Activated CD4-positive, alpha-beta T cell treated with anti-CD3 and anti-CD28 coated beads, Interleukin-2, amount 10 ng/mL, durations not matched to agents 24 days and 14 days (primary cell): ENCODE measurements at regions of chr17 and their contacts with region 1.

Region 1: DNA sequence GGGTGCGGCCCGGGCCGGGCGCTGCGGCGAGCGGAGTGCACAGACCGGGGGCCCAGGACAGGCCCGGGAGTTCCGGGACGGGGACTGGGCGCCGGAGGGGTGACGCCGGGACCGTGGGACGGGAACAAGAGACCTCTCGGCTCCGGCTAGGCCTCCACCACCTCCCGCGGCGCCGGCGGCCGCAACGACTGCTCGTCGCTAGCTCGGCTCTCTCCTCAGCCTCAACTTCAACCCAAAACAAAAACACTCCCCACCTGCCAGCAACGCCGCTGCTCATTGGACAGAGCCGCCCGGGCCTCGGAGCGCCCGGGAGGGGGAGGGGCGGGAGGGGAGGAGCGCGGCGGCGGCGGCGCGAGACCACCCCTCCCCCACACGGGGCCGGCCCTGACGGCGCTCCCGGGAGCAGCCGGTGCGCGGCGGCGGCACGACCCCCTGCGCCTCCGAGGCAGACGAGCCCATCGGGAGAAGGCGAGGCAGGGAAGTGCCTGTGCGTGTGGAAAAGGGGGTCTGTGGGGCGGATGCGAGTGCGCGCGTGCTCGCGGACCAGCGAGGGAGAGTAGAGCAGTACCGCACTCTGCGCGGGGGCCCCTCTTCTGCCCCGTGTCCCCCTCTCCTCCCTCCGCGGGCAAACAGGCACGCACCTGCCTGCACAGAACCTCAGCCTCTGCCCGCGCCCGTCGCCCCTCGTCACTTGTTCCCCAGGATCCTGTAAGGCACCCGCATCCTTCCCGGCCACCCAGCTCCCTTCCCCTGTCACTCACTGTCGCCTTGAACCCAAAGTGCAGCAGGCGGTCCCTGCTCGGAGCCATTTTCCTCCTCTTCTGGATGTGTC is at the start of gene FBXL20:
- DNase-seq: peak; percentile 97
- H3K4me3 Mint-ChIP-seq: peak within 1 kb of the TSS; percentile 93
- H3K27ac Mint-ChIP-seq: peak within 1 kb of the TSS; percentile 96
- H3K4me1 Mint-ChIP-seq: peaks cover 32% of the 10 kb centered on the region
- H3K27me3 Mint-ChIP-seq: no peaks in the 10 kb centered on the region
- total RNA-seq, gene FBXL20: 20.8 and 21.8 TPM in 2 replicates

Region 2: GRCh38 chr17:38702166-38702899 is 699.3 kb before region 1 on chr17:
- intact Hi-C with region 1: loop called (anchors 2 kb)
- DNase-seq: peak; percentile 93
- H3K4me3 Mint-ChIP-seq: peak overlapping the region; percentile 90
- H3K27ac Mint-ChIP-seq: peak overlapping the region; percentile 100
- H3K4me1 Mint-ChIP-seq: peaks cover 47% of the 10 kb centered on the region
- H3K27me3 Mint-ChIP-seq: no peaks in the 10 kb centered on the region

Region 3: GRCh38 chr17:38853292-38854219 is 548.1 kb before region 1 on chr17 and contains the start of gene RPL23:
- intact Hi-C with region 1: loop called (anchors 5 kb)
- DNase-seq: peak; percentile 97
- H3K4me3 Mint-ChIP-seq: peak within 1 kb of the TSS; percentile 91
- H3K27ac Mint-ChIP-seq: peak within 1 kb of the TSS; percentile 98
- H3K4me1 Mint-ChIP-seq: peaks cover 30% of the 10 kb centered on the region
- H3K27me3 Mint-ChIP-seq: no peaks in the 10 kb centered on the region
- total RNA-seq, gene RPL23: 1,994 and 2,005 TPM in 2 replicates

Region 4: DNA sequence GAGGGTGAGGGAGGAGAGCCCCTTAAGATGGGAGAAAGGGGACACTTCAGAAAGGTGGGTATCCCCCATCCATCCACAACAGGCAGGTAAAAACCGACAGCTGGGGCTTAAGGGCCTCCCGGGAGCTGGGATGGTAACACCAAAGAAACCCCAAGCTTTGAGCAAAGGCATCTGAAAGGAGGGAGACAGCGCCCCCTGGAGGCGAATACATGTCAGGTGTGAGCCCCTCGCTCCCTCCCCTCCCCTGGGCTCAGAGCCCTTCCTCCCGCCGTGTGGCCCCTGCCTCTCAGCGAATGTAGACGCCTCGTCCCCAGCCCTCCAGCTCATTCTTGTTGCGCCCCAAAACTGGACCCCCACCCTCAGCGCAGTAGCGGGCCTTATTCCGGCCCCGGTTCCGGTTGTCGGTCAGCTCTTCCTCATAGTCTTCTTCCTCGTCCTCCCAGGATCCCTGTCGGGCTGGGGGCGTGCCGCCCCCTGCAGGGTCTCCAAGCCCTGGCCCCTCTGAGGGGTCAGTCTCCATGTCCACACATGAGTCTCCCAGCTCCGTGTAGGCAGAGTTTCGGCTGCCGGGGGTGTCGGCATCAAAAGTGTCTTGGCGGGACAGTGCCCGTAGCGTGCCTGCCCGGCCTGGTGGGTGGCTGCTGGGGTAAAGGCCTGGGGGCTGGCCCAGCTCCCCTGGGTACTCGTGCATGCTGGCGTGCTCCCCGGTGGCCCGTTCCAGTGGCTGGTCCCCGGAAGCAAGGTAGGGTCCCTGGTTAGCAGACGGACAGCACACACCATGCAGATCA is 226.5 kb before region 1 on chr17:
- intact Hi-C with region 1: no loop called
- DNase-seq: peak; percentile 92
- H3K4me3 Mint-ChIP-seq: no peak overlapping the region
- H3K27ac Mint-ChIP-seq: no peak overlapping the region
- H3K4me1 Mint-ChIP-seq: peaks cover 9% of the 10 kb centered on the region
- H3K27me3 Mint-ChIP-seq: peaks cover 6% of the 10 kb centered on the region

Region 5: GRCh38 chr17:39199820-39200069 is 201.9 kb before region 1 on chr17:
- intact Hi-C with region 1: loop called (anchors 10 kb)
- DNase-seq: peak; percentile 96
- H3K4me3 Mint-ChIP-seq: peak overlapping the region; percentile 98
- H3K27ac Mint-ChIP-seq: peak overlapping the region; percentile 98
- H3K4me1 Mint-ChIP-seq: peaks cover 52% of the 10 kb centered on the region
- H3K27me3 Mint-ChIP-seq: no peaks in the 10 kb centered on the region

Region 6: GRCh38 chr17:39443326-39443725 is 41.7 kb after region 1 on chr17:
- intact Hi-C with region 1: loop called (anchors 5 kb)
- DNase-seq: no peak
- H3K4me3 Mint-ChIP-seq: no peak overlapping the region
- H3K27ac Mint-ChIP-seq: no peak overlapping the region
- H3K4me1 Mint-ChIP-seq: peaks cover 10% of the 10 kb centered on the region
- H3K27me3 Mint-ChIP-seq: no peaks in the 10 kb centered on the region

Region 7: GRCh38 chr17:39461113-39461925 is 59.7 kb after region 1 on chr17 and contains the start of gene CDK12:
- intact Hi-C with region 1: loop called (anchors 2 kb)
- DNase-seq: peak; percentile 98
- H3K4me3 Mint-ChIP-seq: peak within 1 kb of the TSS; percentile 87
- H3K27ac Mint-ChIP-seq: peak within 1 kb of the TSS; percentile 94
- H3K4me1 Mint-ChIP-seq: peaks cover 29% of the 10 kb centered on the region
- H3K27me3 Mint-ChIP-seq: no peaks in the 10 kb centered on the region
- total RNA-seq, gene CDK12: 89.1 and 90.4 TPM in 2 replicates